ENCODE measurements at regions of chr7 and their contacts with region 1.

Region 1: GRCh38 chr7:32670110-32671025 is 175.1 kb downstream of the AVL9 start:
- DNase-seq: peak; percentile 87
- ATAC-seq: peak; percentile 64
- H3K4me3 ChIP-seq: peak overlapping the region; percentile 48; the same call in 1 of the 2 replicates
- H3K27ac ChIP-seq: peak overlapping the region; percentile 99
- H3K4me1 ChIP-seq: peaks cover 40% of the 10 kb centered on the region
- H3K27me3 ChIP-seq: no peaks in the 10 kb centered on the region
- CTCF ChIP-seq: no peak

Region 2: GRCh38 chr7:32154797-32155196 is 515.6 kb before region 1 on chr7:
- CTCF ChIA-PET with region 1: no interaction called
- POLR2A ChIA-PET with region 1: no interaction called
- intact Hi-C with region 1: no loop called
- DNase-seq: no peak
- ATAC-seq: peak; percentile 57
- H3K4me3 ChIP-seq: no peak overlapping the region
- H3K27ac ChIP-seq: no peak overlapping the region
- H3K4me1 ChIP-seq: peaks cover 27% of the 10 kb centered on the region
- H3K27me3 ChIP-seq: no peaks in the 10 kb centered on the region
- CTCF ChIP-seq: no peak

Region 3: GRCh38 chr7:32490127-32490822 is 180.1 kb before region 1 on chr7 and contains the start of gene LSM5:
- CTCF ChIA-PET with region 1: no interaction called
- POLR2A ChIA-PET with region 1: no interaction called
- intact Hi-C with region 1: loop called (anchors 1 kb)
- DNase-seq: peak; percentile 93
- ATAC-seq: peak; percentile 67
- H3K4me3 ChIP-seq: peak within 1 kb of the TSS; percentile 91
- H3K27ac ChIP-seq: peak within 1 kb of the TSS; percentile 70
- H3K4me1 ChIP-seq: peaks cover 14% of the 10 kb centered on the region; the same call in 1 of the 2 replicates
- H3K27me3 ChIP-seq: no peaks in the 10 kb centered on the region
- CTCF ChIP-seq: no peak
- total RNA-seq, gene LSM5: 24.8 and 38.9 TPM in 2 replicates

Region 4: DNA sequence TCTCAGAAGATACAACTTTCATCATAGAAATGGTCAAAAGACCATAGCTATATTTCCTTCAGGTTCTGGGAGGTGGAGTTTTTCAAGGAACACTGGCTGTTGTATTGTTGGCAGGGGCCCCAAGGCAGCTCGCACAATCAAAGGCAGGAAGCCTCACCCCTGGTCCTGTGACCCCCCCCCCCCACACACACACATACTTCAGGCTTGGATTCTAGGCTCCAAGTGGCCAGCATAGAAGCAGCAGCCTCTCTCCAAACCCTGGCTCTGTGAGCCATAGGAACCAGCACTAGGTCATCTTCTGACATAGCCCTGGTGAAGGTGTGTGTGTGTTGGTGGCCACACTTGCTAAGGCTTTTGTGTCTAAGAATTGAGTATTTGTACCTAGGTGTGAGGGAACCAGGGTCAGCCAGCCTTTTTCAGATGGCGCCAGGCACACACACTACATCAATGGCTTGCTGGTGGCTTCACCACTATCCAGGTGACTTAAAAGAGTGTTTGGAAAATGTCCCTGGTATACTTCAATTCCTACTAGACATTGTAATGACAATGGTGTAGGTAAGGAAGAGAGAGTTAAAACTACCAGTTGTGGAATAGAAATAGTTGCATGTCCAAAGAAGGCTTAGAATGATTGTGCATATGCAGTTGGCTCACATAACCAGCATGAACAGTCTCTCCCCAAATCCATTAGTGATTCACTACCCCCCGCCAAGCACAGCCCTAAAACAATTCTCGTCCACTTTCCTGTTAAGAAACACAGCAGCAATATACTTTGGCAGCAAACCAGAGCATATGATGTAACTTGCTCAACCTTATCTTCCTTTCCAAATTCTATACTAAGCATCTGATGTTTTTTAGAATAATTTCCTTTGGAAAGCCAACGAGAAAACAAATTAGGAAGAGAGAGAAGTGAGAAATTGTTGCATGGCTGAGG is 83.8 kb before region 1 on chr7:
- CTCF ChIA-PET with region 1: no interaction called
- POLR2A ChIA-PET with region 1: no interaction called
- intact Hi-C with region 1: loop called (anchors 5 kb)
- DNase-seq: peak; percentile 18
- ATAC-seq: 0 out of 2 replicates have a peak, but pooled peaks have one; percentile 23
- H3K4me3 ChIP-seq: no peak overlapping the region
- H3K27ac ChIP-seq: no peak overlapping the region
- H3K4me1 ChIP-seq: peaks cover 20% of the 10 kb centered on the region
- H3K27me3 ChIP-seq: no peaks in the 10 kb centered on the region
- CTCF ChIP-seq: no peak

Region 5: GRCh38 chr7:32658034-32658944 is 12.1 kb before region 1 on chr7:
- CTCF ChIA-PET with region 1: interaction called, 3 read pairs
- POLR2A ChIA-PET with region 1: no interaction called
- intact Hi-C with region 1: loop called (anchors 1 kb)
- DNase-seq: peak; percentile 90
- ATAC-seq: peak; percentile 99
- H3K4me3 ChIP-seq: peak overlapping the region; percentile 23; the same call in 1 of the 2 replicates
- H3K27ac ChIP-seq: peak overlapping the region; percentile 97
- H3K4me1 ChIP-seq: peaks cover 19% of the 10 kb centered on the region
- H3K27me3 ChIP-seq: no peaks in the 10 kb centered on the region
- CTCF ChIP-seq: no peak

Region 6: DNA sequence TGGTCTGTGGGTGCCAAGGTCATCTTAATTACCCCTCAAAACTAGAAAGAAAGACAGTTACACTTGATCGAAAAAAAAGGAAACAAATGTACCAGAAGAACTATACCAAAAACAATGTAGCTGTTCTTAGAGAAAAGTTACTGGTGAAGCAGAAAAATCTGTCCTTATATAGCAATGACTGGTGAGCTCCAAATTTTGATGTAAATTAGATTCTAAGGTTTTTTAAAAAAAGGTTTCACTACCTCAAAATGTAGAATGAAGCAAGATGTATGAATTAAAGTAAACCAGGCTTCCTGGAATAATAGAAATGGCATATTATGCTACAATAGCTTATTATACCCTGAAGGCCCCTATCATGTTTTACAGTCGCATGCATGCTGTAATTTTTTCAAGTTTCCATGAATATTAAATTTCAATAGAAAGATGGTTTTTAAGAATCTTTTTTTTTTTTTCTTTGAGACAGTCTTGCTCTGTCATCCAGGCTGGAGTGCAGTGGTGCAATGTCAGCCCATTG is 258.5 kb after region 1 on chr7:
- CTCF ChIA-PET with region 1: no interaction called
- POLR2A ChIA-PET with region 1: no interaction called
- intact Hi-C with region 1: no loop called
- DNase-seq: no peak
- ATAC-seq: no peak
- H3K4me3 ChIP-seq: no peak overlapping the region
- H3K27ac ChIP-seq: no peak overlapping the region
- H3K4me1 ChIP-seq: no peaks in the 10 kb centered on the region
- H3K27me3 ChIP-seq: no peaks in the 10 kb centered on the region
- CTCF ChIP-seq: no peak

Region 7: DNA sequence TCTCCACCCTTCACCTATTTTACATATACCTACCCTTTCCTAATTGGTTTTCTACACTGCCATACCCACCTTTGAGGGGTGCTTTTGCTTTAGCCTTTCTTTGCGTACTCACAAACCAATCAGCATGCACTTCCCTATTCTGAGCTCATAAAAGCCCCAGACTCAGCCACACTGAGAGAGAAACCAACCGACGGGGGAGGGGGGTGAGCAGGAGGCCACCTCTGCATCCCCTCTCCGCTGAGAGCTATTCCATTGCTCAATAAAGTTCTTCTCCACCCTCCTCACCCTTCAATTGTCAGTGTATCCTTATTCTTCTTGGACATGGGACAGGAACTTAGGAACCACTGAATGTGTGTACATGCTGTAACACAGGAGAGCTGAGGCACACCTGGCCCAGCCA is 277.8 kb after region 1 on chr7:
- CTCF ChIA-PET with region 1: no interaction called
- POLR2A ChIA-PET with region 1: no interaction called
- intact Hi-C with region 1: no loop called
- DNase-seq: no peak
- ATAC-seq: no peak
- H3K4me3 ChIP-seq: no peak overlapping the region
- H3K27ac ChIP-seq: no peak overlapping the region
- H3K4me1 ChIP-seq: peaks cover 1% of the 10 kb centered on the region; the same call in 1 of the 2 replicates
- H3K27me3 ChIP-seq: no peaks in the 10 kb centered on the region
- CTCF ChIP-seq: no peak

Measured in PC-3 (cell line).